ENCODE measurements at regions of chr3 and their contacts with region 1.

Region 1: GRCh38 chr3:105366326-105367062 is at the start of gene ALCAM:
- DNase-seq: peak; percentile 86 to 94 (median 90)
- ATAC-seq: peak; percentile 88 to 98 (median 96)
- H3K4me3 ChIP-seq: peak within 1 kb of the TSS; percentile 25 to 72 (median 62)
- H3K27ac ChIP-seq: peak within 1 kb of the TSS in 6 of 12 donors; percentile 17 to 73 (median 38)
- H3K4me1 ChIP-seq: peaks cover 0 to 43% (median 21%) of the 10 kb centered on the region in 12 donors
- H3K27me3 ChIP-seq: no peaks in the 10 kb centered on the region
- CTCF ChIP-seq: peak in 10 of 12 donors; percentile 15 to 59 (median 36)
- POLR2A ChIP-seq: no peak
- total RNA-seq, gene ALCAM: 2.3 to 19.9 (median 5.5) TPM

Region 2: GRCh38 chr3:104628185-104628789 is 738.2 kb before region 1 on chr3:
- intact Hi-C with region 1: loop called in 3 of 10 experiments (anchors 5 to 10 kb)
- DNase-seq: no peak
- ATAC-seq: no peak
- H3K4me3 ChIP-seq: no peak overlapping the region
- H3K27ac ChIP-seq: no peak overlapping the region
- H3K4me1 ChIP-seq: no peaks in the 10 kb centered on the region
- H3K27me3 ChIP-seq: no peaks in the 10 kb centered on the region
- CTCF ChIP-seq: peak; percentile 18 to 53 (median 42)
- POLR2A ChIP-seq: no peak

Region 3: GRCh38 chr3:105162448-105162847 is 204.0 kb before region 1 on chr3:
- intact Hi-C with region 1: no loop called
- DNase-seq: no peak
- ATAC-seq: no peak
- H3K4me3 ChIP-seq: no peak overlapping the region
- H3K27ac ChIP-seq: no peak overlapping the region
- H3K4me1 ChIP-seq: peaks cover 0 to 4% (median 0%) of the 10 kb centered on the region in 12 donors
- H3K27me3 ChIP-seq: no peaks in the 10 kb centered on the region
- CTCF ChIP-seq: no peak
- POLR2A ChIP-seq: no peak

Region 4: GRCh38 chr3:105253225-105253624 is 113.3 kb before region 1 on chr3:
- intact Hi-C with region 1: no loop called
- DNase-seq: no peak
- ATAC-seq: no peak
- H3K4me3 ChIP-seq: no peak overlapping the region
- H3K27ac ChIP-seq: no peak overlapping the region
- H3K4me1 ChIP-seq: no peaks in the 10 kb centered on the region
- H3K27me3 ChIP-seq: no peaks in the 10 kb centered on the region
- CTCF ChIP-seq: no peak
- POLR2A ChIP-seq: no peak

Region 5: DNA sequence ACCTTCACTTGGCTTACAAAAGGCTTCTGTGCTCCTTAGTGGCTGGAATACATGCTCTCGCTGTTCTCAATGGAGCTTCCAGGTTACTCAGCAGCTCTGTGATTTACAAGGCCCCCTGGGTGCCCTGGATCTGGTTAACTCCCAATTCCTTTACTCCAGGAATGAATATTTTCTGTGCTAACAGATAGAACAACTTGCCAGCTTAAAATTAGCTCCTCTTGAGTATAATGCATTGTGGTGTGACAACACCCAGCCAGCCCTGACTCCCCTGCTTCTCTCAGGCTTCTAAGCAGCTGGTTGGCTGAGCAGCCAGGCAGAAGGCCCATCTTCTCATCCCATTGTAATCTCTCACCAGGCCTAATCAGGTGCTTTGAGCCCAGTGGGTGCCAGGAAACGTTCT is 246.6 kb after region 1 on chr3:
- intact Hi-C with region 1: no loop called
- DNase-seq: peak in 1 of 5 donors; percentile 30
- ATAC-seq: peak in 3 of 4 donors; percentile 18 to 61 (median 49)
- H3K4me3 ChIP-seq: no peak overlapping the region
- H3K27ac ChIP-seq: no peak overlapping the region
- H3K4me1 ChIP-seq: peaks cover 0 to 11% (median 0%) of the 10 kb centered on the region in 12 donors
- H3K27me3 ChIP-seq: no peaks in the 10 kb centered on the region
- CTCF ChIP-seq: no peak
- POLR2A ChIP-seq: no peak

Region 6: DNA sequence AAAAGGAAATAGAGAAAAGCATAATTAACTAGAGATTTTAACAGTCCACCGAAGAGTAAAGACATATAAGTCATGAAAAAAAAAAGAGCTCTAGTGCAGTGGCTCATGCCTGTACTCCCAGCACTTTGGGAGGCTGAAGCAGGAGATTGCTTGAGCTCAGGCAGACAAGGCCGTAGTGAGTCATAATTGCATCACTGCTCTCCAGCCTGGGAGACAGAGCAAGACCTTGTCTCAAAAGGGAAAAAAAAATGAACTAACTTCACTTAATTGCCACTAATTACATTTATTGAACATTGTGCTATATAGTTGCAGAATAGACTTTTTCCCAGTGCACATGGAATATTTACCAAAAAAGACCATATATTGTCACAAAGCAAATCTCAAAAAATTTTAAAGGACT is 280.6 kb after region 1 on chr3:
- intact Hi-C with region 1: no loop called
- DNase-seq: peak in 2 of 5 donors; percentile 25 to 43
- ATAC-seq: peak in 1 of 4 donors; percentile 83
- H3K4me3 ChIP-seq: no peak overlapping the region
- H3K27ac ChIP-seq: no peak overlapping the region
- H3K4me1 ChIP-seq: no peaks in the 10 kb centered on the region
- H3K27me3 ChIP-seq: no peaks in the 10 kb centered on the region
- CTCF ChIP-seq: no peak
- POLR2A ChIP-seq: no peak

Measured in heart left ventricle (tissue), 16 donors.